ENCODE measurements at regions of chr17 and their contacts with region 1.

Region 1: DNA sequence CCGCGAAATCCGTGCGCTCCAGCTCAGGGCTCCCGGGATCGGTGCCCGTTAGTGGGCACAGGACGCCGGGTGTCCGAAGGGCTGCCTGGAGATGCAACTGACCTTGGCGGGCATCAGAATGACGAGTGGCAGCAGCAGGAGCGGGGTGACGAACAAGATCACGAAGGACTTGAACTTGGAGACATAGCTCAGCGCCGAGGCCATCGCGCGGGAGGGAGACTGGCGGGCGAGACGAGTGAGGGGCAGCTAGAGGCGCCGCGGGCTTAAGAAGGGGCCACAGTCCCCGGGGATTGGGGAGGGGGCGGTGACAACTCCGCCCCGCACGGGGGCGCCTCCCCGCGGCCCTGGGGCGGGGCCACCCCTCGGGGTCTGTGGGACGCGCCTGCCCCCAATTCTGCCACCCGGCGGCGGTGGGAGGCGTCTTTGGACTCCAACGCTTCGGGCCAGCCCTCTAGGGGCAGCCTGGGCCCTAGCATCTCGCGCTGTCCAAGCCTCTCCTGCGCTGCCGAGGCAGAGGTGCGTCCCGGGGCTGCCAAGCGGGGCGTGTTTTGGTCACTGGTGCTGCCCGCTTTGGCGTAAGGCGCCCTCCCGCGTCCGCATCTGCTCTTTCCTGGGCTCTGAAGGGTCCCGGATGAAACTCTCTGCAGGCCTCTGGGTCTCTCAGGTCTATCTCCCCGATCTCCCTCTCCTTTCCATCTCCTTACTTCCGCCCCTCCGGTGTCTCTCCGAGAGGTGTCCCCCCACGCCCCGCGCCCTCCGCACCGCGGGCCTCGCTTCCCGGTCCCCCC is at the start of gene SLC13A5:
- DNase-seq: peak; percentile 87
- ATAC-seq: peak; percentile 90
- H3K4me3 ChIP-seq: peak within 1 kb of the TSS; percentile 60 to 84 (median 84)
- H3K27ac ChIP-seq: peak within 1 kb of the TSS; percentile 74
- H3K4me1 ChIP-seq: peaks cover 61% of the 10 kb centered on the region
- H3K27me3 ChIP-seq: no peaks in the 10 kb centered on the region; a peak in 1 of 5 replicates
- CTCF ChIP-seq: peak; percentile 90
- EP300 ChIP-seq: peak in 1 of 2 experiments; percentile 59; a peak in 1 of 4 replicates
- POLR2A ChIP-seq: peak; percentile 96 to 100
- RAD21 ChIP-seq: peak; percentile 92
- total RNA-seq, gene SLC13A5: 24.4 and 42.8 TPM in 2 replicates

Region 2: DNA sequence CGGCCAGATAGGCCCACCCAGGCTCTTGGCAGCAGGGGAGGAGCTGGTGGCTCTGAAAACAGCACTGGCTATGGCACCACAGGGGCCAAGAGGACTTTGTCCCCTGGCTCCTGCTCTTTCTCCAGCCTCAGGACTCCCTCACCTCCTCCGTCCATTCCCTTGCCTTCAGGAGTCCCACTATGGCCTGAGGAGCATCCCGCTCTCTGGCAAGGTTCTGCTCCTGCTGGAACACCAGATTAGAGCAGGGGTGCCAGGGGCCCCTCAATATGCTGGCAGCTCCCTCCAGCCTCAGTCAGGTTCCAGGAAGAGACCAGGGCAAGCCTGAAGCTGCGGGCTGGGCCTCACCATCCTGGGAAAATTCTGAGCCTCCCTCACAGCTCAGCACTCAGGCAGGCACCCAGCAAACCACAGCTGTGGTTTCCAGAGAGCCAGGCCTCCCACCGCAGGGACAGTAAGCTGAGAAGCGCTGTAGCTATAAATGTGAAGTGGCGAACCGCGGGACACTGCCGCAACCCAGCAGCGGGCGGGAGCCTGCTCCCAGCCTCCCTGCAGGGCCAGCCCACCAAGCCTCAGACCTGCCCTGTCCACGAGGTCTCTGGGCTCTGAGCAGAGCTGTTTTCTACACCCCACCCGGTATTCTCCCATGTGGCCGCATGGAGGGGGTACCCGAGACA is 36.0 kb before region 1 on chr17:
- CTCF ChIA-PET with region 1: interaction called, 3 read pairs
- POLR2A ChIA-PET with region 1: interaction called, 96 read pairs
- in situ Hi-C with region 1: no loop called
- intact Hi-C with region 1: no loop called
- DNase-seq: peak; percentile 27
- ATAC-seq: peak; percentile 69
- H3K4me3 ChIP-seq: peak overlapping the region; percentile 33 to 64 (median 43); a peak in 5 of 6 replicates
- H3K27ac ChIP-seq: peak overlapping the region; percentile 49
- H3K4me1 ChIP-seq: peaks cover 72% of the 10 kb centered on the region
- H3K27me3 ChIP-seq: no peaks in the 10 kb centered on the region; a peak in 1 of 5 replicates
- CTCF ChIP-seq: no peak; the same call in 1 of the 2 replicates
- EP300 ChIP-seq: no peak
- POLR2A ChIP-seq: peak in 1 of 2 experiments; percentile 50; a peak in 1 of 4 replicates
- RAD21 ChIP-seq: no peak

Region 3: DNA sequence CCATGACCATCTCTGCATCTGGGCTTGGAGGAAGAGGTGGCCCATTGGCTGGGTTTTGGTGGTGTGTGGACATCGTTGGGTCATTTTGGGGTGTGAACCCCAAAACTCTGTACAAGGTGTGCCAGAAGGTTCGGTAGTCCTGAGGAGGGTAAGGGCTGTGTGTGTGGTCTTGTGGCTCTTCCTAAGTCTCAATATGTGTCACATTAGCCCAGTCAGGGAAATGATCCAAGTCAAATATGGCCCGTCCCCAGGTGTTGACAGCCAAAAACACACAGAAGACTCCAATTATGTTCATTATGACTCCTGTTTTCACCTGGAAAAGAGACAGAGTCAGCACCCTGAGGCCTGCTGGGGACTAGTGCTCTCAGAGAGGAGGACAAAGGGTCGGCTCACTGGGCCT is 27.3 kb before region 1 on chr17:
- CTCF ChIA-PET with region 1: interaction called, 3 read pairs
- POLR2A ChIA-PET with region 1: interaction called, 96 read pairs
- in situ Hi-C with region 1: no loop called
- intact Hi-C with region 1: no loop called
- DNase-seq: no peak
- ATAC-seq: no peak
- H3K4me3 ChIP-seq: no peak overlapping the region
- H3K27ac ChIP-seq: no peak overlapping the region
- H3K4me1 ChIP-seq: peaks cover 52% of the 10 kb centered on the region
- H3K27me3 ChIP-seq: no peaks in the 10 kb centered on the region
- CTCF ChIP-seq: no peak
- EP300 ChIP-seq: no peak
- POLR2A ChIP-seq: no peak
- RAD21 ChIP-seq: no peak

Region 4: DNA sequence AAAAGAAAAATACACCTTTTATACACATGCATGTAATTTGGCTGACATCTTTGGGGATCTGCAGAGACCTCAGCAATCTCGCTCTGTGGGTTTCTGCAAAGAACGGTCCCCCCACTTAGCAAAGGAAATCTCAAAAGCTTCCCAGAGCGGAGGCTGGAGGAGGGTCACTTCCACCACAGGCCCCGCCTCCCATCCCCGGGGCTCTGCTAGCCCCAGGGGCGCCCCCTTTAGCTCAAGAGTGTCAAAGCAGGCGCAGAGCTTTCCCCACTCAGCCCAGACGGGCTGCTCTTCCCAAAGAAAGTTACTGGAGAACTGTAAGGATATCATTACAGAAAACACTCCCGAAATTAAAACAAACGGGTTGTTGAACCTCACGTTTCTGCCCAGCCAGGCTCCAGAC is 11.6 kb before region 1 on chr17:
- CTCF ChIA-PET with region 1: interaction called, 11 read pairs
- POLR2A ChIA-PET with region 1: interaction called, 419 read pairs
- in situ Hi-C with region 1: no loop called
- intact Hi-C with region 1: loop called (anchors 1 kb)
- DNase-seq: peak; percentile 61
- ATAC-seq: peak; percentile 29
- H3K4me3 ChIP-seq: peak overlapping the region in 1 of 3 experiments; percentile 41; a peak in 1 of 6 replicates
- H3K27ac ChIP-seq: peak overlapping the region; percentile 97
- H3K4me1 ChIP-seq: peaks cover 87% of the 10 kb centered on the region
- H3K27me3 ChIP-seq: no peaks in the 10 kb centered on the region
- CTCF ChIP-seq: peak; percentile 64
- EP300 ChIP-seq: no peak
- POLR2A ChIP-seq: no peak
- RAD21 ChIP-seq: peak; percentile 46; the same call in 1 of the 2 replicates

Region 5: DNA sequence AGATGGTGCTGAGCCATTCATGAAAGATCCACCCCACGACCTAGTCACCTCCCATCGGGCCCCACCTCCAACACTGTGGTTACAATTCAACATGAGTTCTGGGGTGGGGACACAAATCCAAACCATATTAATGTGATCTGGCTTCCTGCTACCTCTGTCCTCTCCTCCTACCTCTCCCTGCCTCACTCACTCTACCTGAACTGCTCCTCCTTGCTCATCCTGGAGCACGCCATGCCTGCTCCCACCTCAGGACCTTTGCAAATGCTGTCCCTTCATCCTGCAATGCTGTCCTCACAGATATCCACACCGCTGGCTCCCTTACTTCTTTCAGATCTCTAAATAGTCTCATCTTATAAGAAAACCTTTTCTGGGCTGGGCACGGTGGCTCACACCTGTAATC is 10.7 kb after region 1 on chr17:
- CTCF ChIA-PET with region 1: no interaction called
- POLR2A ChIA-PET with region 1: interaction called, 10 read pairs
- in situ Hi-C with region 1: no loop called
- intact Hi-C with region 1: no loop called
- DNase-seq: no peak
- ATAC-seq: no peak
- H3K4me3 ChIP-seq: no peak overlapping the region
- H3K27ac ChIP-seq: no peak overlapping the region
- H3K4me1 ChIP-seq: peaks cover 61% of the 10 kb centered on the region
- H3K27me3 ChIP-seq: peaks cover 0 to under 1% of the 10 kb centered on the region in 2 experiments; a peak in 1 of 5 replicates
- CTCF ChIP-seq: no peak
- EP300 ChIP-seq: no peak
- POLR2A ChIP-seq: no peak
- RAD21 ChIP-seq: no peak

Region 6: GRCh38 chr17:6796887-6797490 is 83.7 kb after region 1 on chr17:
- CTCF ChIA-PET with region 1: no interaction called
- POLR2A ChIA-PET with region 1: interaction called, 8 read pairs
- in situ Hi-C with region 1: no loop called
- intact Hi-C with region 1: loop called (anchors 10 kb)
- DNase-seq: no peak
- ATAC-seq: no peak
- H3K4me3 ChIP-seq: peak overlapping the region in 2 of 3 experiments; percentile 42 to 52; a peak in 2 of 6 replicates
- H3K27ac ChIP-seq: peak overlapping the region; percentile 78
- H3K4me1 ChIP-seq: peaks cover 54% of the 10 kb centered on the region
- H3K27me3 ChIP-seq: no peaks in the 10 kb centered on the region
- CTCF ChIP-seq: no peak
- EP300 ChIP-seq: no peak
- POLR2A ChIP-seq: no peak
- RAD21 ChIP-seq: no peak

Region 7: DNA sequence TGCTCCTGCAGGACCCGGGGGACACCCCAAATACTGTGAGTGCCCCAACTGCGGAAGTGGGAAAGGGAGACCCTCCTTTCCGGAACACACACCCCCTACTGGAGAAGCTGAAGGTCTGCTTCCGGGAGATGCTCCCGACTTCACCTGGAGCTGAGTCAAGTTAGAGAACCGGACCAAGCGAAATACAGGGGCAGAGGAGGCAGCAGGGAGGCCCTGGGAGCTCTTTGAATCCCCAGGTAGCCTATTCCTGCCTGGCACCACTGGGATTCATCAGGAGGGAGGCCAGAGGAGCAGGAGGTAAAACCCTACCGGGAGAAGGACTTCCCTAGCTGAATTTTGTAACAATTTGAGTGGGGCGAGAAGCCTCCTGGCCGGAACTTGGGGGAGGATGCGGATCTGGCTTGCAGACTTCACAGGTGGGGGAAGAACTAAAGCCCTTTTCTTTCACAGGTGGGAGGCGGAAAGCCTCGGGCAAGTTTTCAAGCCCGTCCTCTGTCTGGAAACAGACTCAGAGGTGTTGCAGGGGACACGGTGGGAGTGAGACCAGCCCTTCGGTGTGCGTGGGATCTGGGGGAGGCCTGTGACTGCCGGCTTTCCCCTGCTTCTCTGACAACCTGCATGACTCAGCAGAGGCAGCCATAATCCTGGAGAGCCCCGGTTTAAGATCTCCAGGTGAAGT is 140.6 kb after region 1 on chr17:
- CTCF ChIA-PET with region 1: no interaction called
- POLR2A ChIA-PET with region 1: interaction called, 13 read pairs
- in situ Hi-C with region 1: no loop called
- intact Hi-C with region 1: no loop called
- DNase-seq: peak; percentile 82
- ATAC-seq: peak; percentile 97
- H3K4me3 ChIP-seq: peak overlapping the region; percentile 63 to 91 (median 82)
- H3K27ac ChIP-seq: peak overlapping the region; percentile 79
- H3K4me1 ChIP-seq: peaks cover 48% of the 10 kb centered on the region
- H3K27me3 ChIP-seq: no peaks in the 10 kb centered on the region; a peak in 1 of 5 replicates
- CTCF ChIP-seq: peak; percentile 85
- EP300 ChIP-seq: no peak
- POLR2A ChIP-seq: peak; percentile 56 to 59
- RAD21 ChIP-seq: 0 out of 2 replicates have a peak, but pooled peaks have one; percentile 8

Measured in HepG2 (cell line).